K562 (cell line): ENCODE measurements at regions of chr2 and their contacts with region 1.

Region 1: DNA sequence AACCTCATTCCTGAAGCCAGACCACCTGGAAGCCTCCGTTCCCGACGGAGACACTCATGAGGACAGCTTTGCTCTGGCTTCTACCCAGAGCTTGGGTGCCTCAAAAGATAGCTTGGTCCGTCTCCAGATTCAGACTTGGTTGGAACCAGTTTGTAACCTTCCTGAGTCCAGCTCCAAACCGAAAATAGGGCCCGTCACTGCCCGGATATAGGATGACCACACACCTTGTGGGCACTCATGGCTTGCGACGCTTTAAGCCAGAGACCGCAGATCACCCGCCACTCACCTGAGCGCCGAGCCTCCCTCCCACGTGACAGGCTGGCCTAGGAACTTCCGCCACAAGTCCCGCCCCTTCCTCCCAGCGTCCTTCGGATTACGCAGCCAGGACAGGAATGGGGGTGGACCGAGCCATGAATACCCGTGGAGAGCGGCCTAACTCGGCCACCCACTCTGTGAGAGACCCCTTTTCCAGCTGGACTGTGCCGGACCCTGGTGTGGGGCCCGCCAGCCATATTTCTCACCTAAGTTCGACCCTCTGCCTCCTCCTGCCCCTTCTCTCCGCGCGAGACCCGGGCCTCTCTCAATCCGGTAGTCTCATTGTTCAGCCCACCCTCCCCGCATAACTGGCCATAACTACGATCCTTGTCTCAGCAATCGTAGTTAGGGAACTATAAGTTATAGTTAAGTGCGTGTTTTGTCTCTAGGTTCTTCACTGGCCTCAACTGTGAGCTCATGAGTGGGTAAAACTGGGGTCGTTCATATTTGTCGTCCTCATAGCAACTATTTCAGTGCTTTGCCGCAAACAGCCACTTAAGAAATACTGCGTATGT is at the start of gene MPV17:
- DNase-seq: peak; percentile 96
- ATAC-seq: peak; percentile 95
- H3K4me3 ChIP-seq: peak within 1 kb of the TSS; percentile 71
- H3K27ac ChIP-seq: peak within 1 kb of the TSS; percentile 98
- H3K4me1 ChIP-seq: peaks cover 8 to 21% of the 10 kb centered on the region in 2 experiments; a peak in 4 of 5 replicates
- H3K27me3 ChIP-seq: no peaks in the 10 kb centered on the region
- CTCF ChIP-seq: no peak
- EP300 ChIP-seq: 0 out of 2 replicates have a peak, but pooled peaks have one; percentile 28
- POLR2A ChIP-seq: peak; percentile 98
- RAD21 ChIP-seq: no peak; a peak in 1 of 4 replicates
- polyA plus RNA-seq, gene MPV17: 69.8 to 81.8 TPM

Region 2: DNA sequence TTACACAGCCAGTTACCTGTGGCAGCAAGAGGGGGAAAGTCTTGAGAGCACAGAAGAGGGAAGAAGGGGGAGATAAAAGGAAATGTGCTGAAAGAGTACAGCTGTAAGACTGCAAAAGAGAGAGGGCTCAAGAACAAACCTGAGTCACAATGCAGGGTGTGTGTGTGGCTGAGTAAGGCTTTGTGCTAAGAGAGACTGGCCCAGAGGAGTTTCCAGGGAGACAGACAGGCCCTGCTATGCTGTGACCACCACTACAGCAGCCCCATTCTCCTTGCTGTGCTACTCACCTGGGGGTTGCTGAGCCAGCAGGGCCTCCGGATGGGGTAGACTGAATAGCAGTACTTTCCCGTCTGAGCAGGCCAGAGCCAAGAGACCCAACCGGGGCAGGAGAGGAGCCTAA is 12.3 kb after region 1 on chr2:
- CTCF ChIA-PET with region 1: no interaction called
- POLR2A ChIA-PET with region 1: interaction called, 22 read pairs
- in situ Hi-C with region 1: no loop called
- intact Hi-C with region 1: no loop called
- DNase-seq: no peak
- ATAC-seq: no peak
- H3K4me3 ChIP-seq: no peak overlapping the region
- H3K27ac ChIP-seq: no peak overlapping the region; the same call in 2 of the 3 replicates
- H3K4me1 ChIP-seq: no peaks in the 10 kb centered on the region
- H3K27me3 ChIP-seq: no peaks in the 10 kb centered on the region
- CTCF ChIP-seq: no peak
- EP300 ChIP-seq: no peak
- POLR2A ChIP-seq: no peak
- RAD21 ChIP-seq: no peak

Region 3: DNA sequence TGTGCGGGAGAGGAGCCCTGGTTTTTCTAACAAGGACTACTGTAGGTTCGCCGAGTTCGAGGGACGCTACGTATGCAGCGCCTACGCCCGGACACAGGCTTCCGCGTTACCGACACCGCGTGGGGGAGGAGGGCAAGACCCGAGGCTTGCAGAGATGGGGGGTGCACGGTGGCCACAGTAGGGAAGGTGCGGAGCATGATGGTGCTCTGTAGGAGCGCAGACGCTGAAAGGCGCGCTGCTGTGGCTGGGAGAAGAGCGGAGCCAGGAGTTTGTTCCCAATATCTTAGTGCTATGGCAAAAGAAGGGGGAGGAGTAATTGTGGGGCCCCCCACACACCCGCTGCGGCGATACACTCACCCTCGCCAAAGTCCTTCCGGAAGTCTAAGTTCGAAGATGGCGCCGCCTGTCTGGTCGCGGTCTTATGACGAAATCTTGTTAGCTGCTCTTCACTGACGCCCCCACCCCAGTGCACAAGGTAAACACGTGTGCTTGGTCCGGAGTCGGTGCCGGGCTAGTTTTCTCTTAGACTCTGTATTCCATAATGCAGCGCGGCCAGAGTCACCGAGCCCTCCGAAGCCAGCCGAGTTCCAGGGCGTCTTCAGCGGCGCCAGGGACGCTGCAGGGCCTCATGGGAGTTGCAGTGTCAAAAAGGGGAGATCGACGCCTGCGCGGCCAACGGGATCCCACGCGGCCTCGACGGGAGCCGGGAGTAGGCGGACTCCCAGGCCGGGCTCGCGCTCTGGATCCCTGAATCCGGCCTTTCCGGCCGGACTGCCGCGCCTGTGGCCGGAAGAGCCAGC is 33.6 kb after region 1 on chr2 and contains the start of gene GTF3C2:
- CTCF ChIA-PET with region 1: interaction called, 4 read pairs
- POLR2A ChIA-PET with region 1: interaction called, 13 read pairs
- in situ Hi-C with region 1: no loop called
- intact Hi-C with region 1: loop called (anchors 1 kb)
- DNase-seq: peak; percentile 87 to 98 (median 89)
- ATAC-seq: peak; percentile 88
- H3K4me3 ChIP-seq: peak within 1 kb of the TSS; percentile 77
- H3K27ac ChIP-seq: peak within 1 kb of the TSS; percentile 98
- H3K4me1 ChIP-seq: peaks cover 12 to 19% of the 10 kb centered on the region in 2 experiments; a peak in 4 of 5 replicates
- H3K27me3 ChIP-seq: no peaks in the 10 kb centered on the region
- CTCF ChIP-seq: no peak
- EP300 ChIP-seq: peak; percentile 31
- POLR2A ChIP-seq: peak; percentile 88
- RAD21 ChIP-seq: no peak
- polyA plus RNA-seq, gene GTF3C2: 35.5 to 40.2 TPM